Heart left ventricle (tissue), 16 donors: ENCODE measurements at regions of chr12 and their contacts with region 1.

Region 1: DNA sequence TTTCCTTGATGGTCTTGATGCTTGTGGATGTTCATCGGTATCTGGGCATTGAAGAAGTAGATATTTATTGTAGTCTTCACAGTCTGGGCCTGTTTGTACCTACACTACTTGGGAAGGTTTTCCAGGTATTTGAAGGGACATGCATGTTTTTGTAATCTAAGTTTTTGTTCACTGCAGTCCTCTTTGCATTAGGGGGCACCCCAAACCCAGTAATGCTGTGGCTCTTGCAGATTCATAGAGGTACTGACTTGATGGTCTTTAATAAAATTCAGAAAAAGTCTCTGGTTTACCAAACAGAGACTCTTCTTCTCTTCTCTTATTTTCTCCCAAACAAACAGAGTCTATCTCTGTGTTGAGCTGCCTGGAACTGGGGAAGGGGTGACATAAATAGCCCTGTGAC is 150.9 kb upstream of the SLC16A7 start:
- DNase-seq: no peak
- ATAC-seq: no peak
- H3K4me3 ChIP-seq: no peak overlapping the region
- H3K27ac ChIP-seq: no peak overlapping the region
- H3K4me1 ChIP-seq: no peaks in the 10 kb centered on the region
- H3K27me3 ChIP-seq: no peaks in the 10 kb centered on the region
- CTCF ChIP-seq: peak in 10 of 12 donors; percentile 13 to 50 (median 41)
- POLR2A ChIP-seq: no peak

Region 2: DNA sequence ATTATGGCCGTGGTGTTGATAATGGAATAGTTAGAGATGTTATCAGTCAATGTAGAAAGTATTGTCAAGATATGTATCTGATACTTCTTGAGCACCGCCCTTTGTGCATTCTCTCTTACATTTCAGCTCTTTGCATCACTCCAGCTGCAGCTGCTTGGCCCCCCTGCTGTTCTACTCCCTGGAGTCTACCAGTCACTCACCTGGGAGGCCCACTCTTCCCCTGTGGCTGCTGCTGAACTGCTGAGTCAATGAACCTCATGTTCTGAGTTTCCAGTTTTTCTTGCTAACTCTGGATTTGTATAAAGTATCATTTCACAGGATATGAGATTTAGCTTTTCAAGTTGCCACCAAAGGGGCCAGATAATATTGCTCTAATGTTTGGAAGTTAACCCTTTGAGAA is 161.9 kb before region 1 on chr12:
- intact Hi-C with region 1: no loop called
- DNase-seq: no peak
- ATAC-seq: no peak
- H3K4me3 ChIP-seq: no peak overlapping the region
- H3K27ac ChIP-seq: no peak overlapping the region
- H3K4me1 ChIP-seq: no peaks in the 10 kb centered on the region
- H3K27me3 ChIP-seq: no peaks in the 10 kb centered on the region
- CTCF ChIP-seq: no peak
- POLR2A ChIP-seq: no peak

Region 3: GRCh38 chr12:59808317-59808910 is 363.5 kb after region 1 on chr12:
- intact Hi-C with region 1: loop called in 7 of 10 experiments (anchors 10 kb)
- DNase-seq: no peak
- ATAC-seq: peak in 3 of 4 donors; percentile 57 to 82 (median 70)
- H3K4me3 ChIP-seq: no peak overlapping the region
- H3K27ac ChIP-seq: no peak overlapping the region
- H3K4me1 ChIP-seq: no peaks in the 10 kb centered on the region
- H3K27me3 ChIP-seq: no peaks in the 10 kb centered on the region
- CTCF ChIP-seq: peak; percentile 61 to 81 (median 68)
- POLR2A ChIP-seq: no peak